Activated naive CD4-positive, alpha-beta T cell treated with anti-CD3 and anti-CD28 coated beads for 36 hours (primary cell): ENCODE measurements at regions of chr4 and their contacts with region 1.

Region 1: GRCh38 chr4:39181905-39182638 is at the start of gene WDR19:
- DNase-seq: peak; percentile 99
- H3K4me3 Mint-ChIP-seq: no peak within 1 kb of the TSS
- H3K27ac Mint-ChIP-seq: no peak within 1 kb of the TSS
- H3K4me1 Mint-ChIP-seq: peaks cover 6% of the 10 kb centered on the region
- H3K27me3 Mint-ChIP-seq: no peaks in the 10 kb centered on the region
- total RNA-seq, gene WDR19: 12.9 to 18.9 TPM

Region 2: DNA sequence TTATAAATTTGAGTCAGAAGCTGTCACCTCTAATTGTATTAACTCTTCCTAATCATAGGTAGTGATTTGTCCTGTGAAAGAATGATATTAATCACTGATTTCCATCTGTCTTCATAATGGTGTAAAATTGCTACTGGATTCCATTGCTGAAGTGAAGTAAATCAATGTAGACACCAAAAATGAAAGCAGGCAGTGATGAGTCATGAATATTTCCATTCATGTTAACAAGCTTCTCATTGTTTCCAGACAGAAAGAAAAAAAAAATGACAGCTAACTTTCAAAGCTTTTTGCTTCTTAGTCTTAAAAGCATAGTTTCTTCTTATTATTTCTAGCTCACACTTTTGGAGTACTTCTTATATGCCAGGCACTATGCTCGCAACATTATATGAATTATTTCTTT is 292.9 kb before region 1 on chr4:
- CTCF ChIA-PET with region 1: interaction called, 3 read pairs
- intact Hi-C with region 1: loop called (anchors 1 kb)
- DNase-seq: no peak
- H3K4me3 Mint-ChIP-seq: peak overlapping the region; percentile 46
- H3K27ac Mint-ChIP-seq: peak overlapping the region; percentile 88
- H3K4me1 Mint-ChIP-seq: peaks cover 23% of the 10 kb centered on the region
- H3K27me3 Mint-ChIP-seq: no peaks in the 10 kb centered on the region

Region 3: GRCh38 chr4:39044364-39044955 is 137.6 kb before region 1 on chr4:
- CTCF ChIA-PET with region 1: no interaction called
- intact Hi-C with region 1: loop called (anchors 1 kb)
- DNase-seq: peak; percentile 99
- H3K4me3 Mint-ChIP-seq: peak overlapping the region; percentile 83
- H3K27ac Mint-ChIP-seq: peak overlapping the region; percentile 92
- H3K4me1 Mint-ChIP-seq: peaks cover 51% of the 10 kb centered on the region
- H3K27me3 Mint-ChIP-seq: no peaks in the 10 kb centered on the region

Region 4: DNA sequence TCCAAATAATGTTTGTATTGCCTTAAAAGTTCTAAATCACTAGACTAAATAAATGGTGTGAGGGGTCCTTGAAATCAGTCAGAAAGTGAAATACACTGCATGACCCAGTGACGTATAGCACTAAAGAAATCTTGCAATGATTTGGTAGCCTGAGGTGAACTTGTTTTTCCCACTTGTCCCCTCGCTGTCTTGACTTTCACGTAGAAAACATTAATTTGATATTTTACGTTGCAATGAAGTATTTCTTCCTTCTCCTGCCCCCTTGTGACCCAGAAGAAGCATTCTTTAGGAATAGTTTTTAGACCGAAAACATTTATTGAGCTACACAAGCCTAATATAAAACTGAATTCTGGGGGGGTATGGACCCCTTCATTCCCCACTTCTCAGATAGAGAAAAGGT is 228.3 kb after region 1 on chr4:
- CTCF ChIA-PET with region 1: interaction called, 3 read pairs
- intact Hi-C with region 1: loop called (anchors 1 kb)
- DNase-seq: no peak
- H3K4me3 Mint-ChIP-seq: no peak overlapping the region
- H3K27ac Mint-ChIP-seq: no peak overlapping the region
- H3K4me1 Mint-ChIP-seq: no peaks in the 10 kb centered on the region
- H3K27me3 Mint-ChIP-seq: no peaks in the 10 kb centered on the region

Region 5: DNA sequence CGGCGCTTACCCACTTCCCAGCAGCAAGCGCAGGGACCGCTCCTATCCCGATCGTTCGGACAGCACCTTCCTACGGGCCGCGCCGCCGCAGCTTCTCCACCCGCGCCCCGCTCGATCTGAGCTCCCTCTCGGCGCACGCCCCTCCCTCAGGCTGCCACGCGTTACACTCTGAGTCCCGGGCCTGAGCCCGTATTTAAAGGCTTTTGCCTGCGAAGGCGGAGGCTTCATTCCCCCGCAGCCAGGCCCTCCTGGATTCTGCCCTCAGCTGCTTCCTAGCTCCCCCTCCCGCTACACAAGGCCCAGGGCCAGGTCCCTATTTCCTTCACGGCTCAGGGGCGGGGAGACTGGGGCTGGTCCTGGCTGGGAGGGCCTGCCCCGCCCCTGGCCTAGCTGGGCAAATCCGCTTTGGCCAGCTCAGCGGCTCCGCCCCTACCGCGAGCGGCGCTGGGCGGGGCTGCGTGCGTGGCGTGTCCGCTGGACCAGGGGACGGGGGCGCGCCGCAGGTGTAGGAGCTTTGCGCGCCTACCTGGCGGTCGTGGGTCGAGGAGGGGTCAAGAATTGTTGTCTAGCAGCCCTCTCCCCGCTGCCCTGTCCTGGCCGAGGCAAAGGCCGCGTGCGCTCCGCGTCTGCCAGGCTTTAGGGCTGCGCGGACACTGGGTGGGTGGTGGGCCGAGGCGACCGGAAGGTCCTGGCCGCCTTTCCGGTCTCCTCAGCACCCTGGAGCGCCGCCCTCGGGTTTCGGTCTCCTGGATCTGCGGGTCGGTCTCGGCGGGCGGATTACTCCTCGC is 345.4 kb after region 1 on chr4 and contains the start of gene UGDH:
- CTCF ChIA-PET with region 1: no interaction called
- intact Hi-C with region 1: loop called (anchors 1 kb)
- DNase-seq: peak; percentile 91
- H3K4me3 Mint-ChIP-seq: peak within 1 kb of the TSS; percentile 97
- H3K27ac Mint-ChIP-seq: peak within 1 kb of the TSS; percentile 81
- H3K4me1 Mint-ChIP-seq: peaks cover 18% of the 10 kb centered on the region
- H3K27me3 Mint-ChIP-seq: no peaks in the 10 kb centered on the region
- total RNA-seq, gene UGDH: 11.7 to 14.6 TPM

Region 6: DNA sequence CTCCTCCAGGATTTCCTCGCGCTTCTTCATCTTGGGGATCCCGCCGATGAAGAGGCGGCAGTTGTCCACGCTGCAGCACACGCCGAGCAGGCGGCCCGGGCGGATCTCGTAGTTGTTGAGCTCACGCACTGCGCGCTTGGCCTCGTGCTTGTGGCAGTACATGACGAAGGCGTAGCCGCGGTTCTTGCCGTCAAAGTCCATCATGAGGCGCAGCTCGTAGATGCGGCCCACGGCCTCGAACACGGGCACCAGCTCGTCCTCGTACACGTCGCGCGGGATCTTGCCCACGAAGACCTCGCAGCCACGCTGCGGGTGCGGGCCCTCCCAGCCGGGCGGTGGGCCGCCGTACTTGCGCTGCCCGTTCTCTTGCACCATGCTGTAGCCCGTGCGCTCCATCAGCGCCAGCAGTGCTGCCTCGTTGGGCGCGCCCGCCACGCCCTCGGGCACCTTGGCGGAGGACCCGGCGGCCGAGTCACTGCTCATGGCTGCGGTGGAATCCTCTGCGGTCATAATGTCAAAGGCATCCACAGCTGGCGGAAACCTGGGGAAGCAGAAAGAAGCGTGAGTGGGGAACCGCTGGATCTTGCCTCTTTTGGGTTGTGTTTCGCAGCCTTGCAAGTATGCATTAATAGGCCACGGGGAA is 1256.4 kb after region 1 on chr4:
- CTCF ChIA-PET with region 1: no interaction called
- intact Hi-C with region 1: loop called (anchors 1 kb)
- DNase-seq: no peak
- H3K4me3 Mint-ChIP-seq: no peak overlapping the region
- H3K27ac Mint-ChIP-seq: no peak overlapping the region
- H3K4me1 Mint-ChIP-seq: peaks cover 36% of the 10 kb centered on the region
- H3K27me3 Mint-ChIP-seq: no peaks in the 10 kb centered on the region